MCF 10A (cell line): ENCODE measurements at regions of chr20 and their contacts with region 1.

Region 1: GRCh38 chr20:50509935-50510705 is at the start of gene PTPN1:
- DNase-seq: peak; percentile 99
- H3K4me3 Mint-ChIP-seq: peak within 1 kb of the TSS; percentile 91
- H3K27ac Mint-ChIP-seq: peak within 1 kb of the TSS; percentile 93
- H3K4me1 Mint-ChIP-seq: peaks cover 31% of the 10 kb centered on the region
- H3K27me3 Mint-ChIP-seq: no peaks in the 10 kb centered on the region
- CTCF ChIP-seq: no peak
- total RNA-seq, gene PTPN1: 56.4 and 63.0 TPM in 2 replicates

Region 2: GRCh38 chr20:50153485-50154377 is 356.4 kb before region 1 on chr20 and contains the start of gene PEDS1:
- CTCF ChIA-PET with region 1: interaction called, 4 read pairs
- POLR2A ChIA-PET with region 1: interaction called, 19 read pairs
- intact Hi-C with region 1: no loop called
- DNase-seq: peak; percentile 85
- H3K4me3 Mint-ChIP-seq: peak within 1 kb of the TSS; percentile 87
- H3K27ac Mint-ChIP-seq: peak within 1 kb of the TSS; percentile 94
- H3K4me1 Mint-ChIP-seq: peaks cover 44% of the 10 kb centered on the region
- H3K27me3 Mint-ChIP-seq: no peaks in the 10 kb centered on the region
- CTCF ChIP-seq: no peak
- total RNA-seq, gene PEDS1: 26.0 and 30.5 TPM in 2 replicates

Region 3: DNA sequence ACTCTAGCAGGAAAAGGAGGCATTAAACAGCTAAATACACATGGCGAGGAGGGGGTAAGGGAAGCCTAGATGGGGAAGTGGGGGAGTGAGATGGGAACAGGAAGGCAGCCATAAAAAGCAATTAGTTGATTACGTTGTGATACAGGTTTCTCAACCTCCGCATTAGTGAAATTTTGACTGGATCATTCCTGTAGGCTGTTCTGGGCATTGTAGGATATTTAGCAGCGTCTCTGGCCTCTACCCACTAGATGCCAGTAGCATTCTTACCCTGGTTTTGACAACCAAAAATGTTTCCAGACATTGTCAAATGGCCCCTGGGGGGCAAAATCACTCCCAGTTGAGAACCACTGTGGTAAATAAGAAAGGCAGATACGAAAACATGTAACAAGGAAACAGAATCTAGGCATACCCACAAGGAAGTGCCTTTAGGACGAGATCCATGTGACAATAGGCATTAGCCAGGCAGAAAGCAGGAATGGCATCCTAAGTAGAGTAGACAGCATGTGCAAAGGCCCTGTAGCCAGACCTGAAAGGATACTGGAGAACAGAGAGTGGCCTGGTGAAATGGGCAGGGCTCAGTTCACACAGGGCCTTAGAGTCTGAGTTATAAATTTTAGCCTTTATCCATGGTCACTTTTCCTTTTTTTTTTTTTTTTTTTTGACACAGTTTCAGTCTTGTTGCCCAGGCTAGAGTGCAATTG is 25.7 kb before region 1 on chr20:
- CTCF ChIA-PET with region 1: interaction called, 30 read pairs
- POLR2A ChIA-PET with region 1: interaction called, 480 read pairs
- intact Hi-C with region 1: loop called (anchors 5 kb)
- DNase-seq: peak; percentile 30
- H3K4me3 Mint-ChIP-seq: peak overlapping the region; percentile 75
- H3K27ac Mint-ChIP-seq: peak overlapping the region; percentile 90
- H3K4me1 Mint-ChIP-seq: peaks cover 12% of the 10 kb centered on the region
- H3K27me3 Mint-ChIP-seq: no peaks in the 10 kb centered on the region
- CTCF ChIP-seq: peak; percentile 29

Region 4: DNA sequence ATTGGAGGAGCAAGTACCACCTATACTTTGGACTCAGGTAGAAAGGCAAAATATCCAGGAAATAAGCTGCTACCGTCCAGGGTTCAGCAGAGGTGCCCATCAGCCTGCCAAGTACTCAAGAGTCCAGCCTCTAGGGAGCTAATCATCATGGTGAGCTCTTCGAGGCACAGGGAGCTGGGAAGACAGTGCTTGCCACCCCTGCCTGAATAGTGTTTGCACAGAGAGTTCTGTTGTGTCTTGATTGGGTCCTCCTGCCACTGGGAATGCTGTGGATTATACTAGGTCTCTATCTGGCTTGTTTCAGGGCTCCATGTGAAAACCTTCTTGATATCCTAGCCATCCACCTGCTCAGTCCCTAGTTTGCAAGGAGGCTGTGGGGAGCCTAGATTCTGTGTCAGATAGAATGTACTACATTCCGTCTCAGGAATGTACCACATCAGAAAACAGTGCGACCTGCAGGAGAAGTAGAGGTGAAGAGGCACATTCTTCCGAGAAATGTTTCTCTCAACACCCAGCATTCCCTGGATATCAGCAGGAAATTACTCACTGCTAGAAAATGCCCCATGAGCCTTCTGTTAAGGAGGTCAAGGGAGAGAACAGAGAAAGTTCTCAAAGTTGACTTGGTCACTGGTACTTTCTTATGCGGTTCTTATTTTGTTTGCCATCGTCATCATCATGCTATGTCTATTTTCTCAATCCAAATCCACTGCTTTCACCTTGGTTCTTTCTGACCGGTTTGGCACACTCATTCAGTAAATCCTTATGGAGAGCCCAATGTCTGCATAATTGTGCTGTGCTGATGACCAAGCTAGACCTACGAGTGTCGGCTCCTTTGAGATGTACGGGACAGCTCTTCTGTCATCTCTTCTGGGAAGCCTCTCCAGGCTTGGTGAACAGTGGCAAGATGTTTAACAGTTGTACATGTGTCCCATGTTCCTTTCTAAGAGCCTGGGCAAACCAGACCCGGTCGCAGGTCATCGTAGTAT is 30.8 kb after region 1 on chr20:
- CTCF ChIA-PET with region 1: interaction called, 3 read pairs
- POLR2A ChIA-PET with region 1: interaction called, 109 read pairs
- intact Hi-C with region 1: no loop called
- DNase-seq: peak; percentile 74
- H3K4me3 Mint-ChIP-seq: peak overlapping the region; percentile 51
- H3K27ac Mint-ChIP-seq: peak overlapping the region; percentile 50
- H3K4me1 Mint-ChIP-seq: peaks cover 45% of the 10 kb centered on the region
- H3K27me3 Mint-ChIP-seq: no peaks in the 10 kb centered on the region
- CTCF ChIP-seq: no peak

Region 5: GRCh38 chr20:50561379-50562078 is 51.4 kb after region 1 on chr20:
- CTCF ChIA-PET with region 1: interaction called, 7 read pairs
- POLR2A ChIA-PET with region 1: interaction called, 146 read pairs
- intact Hi-C with region 1: no loop called
- DNase-seq: peak; percentile 89
- H3K4me3 Mint-ChIP-seq: peak overlapping the region; percentile 55
- H3K27ac Mint-ChIP-seq: peak overlapping the region; percentile 97
- H3K4me1 Mint-ChIP-seq: peaks cover 47% of the 10 kb centered on the region
- H3K27me3 Mint-ChIP-seq: no peaks in the 10 kb centered on the region
- CTCF ChIP-seq: no peak

Region 6: DNA sequence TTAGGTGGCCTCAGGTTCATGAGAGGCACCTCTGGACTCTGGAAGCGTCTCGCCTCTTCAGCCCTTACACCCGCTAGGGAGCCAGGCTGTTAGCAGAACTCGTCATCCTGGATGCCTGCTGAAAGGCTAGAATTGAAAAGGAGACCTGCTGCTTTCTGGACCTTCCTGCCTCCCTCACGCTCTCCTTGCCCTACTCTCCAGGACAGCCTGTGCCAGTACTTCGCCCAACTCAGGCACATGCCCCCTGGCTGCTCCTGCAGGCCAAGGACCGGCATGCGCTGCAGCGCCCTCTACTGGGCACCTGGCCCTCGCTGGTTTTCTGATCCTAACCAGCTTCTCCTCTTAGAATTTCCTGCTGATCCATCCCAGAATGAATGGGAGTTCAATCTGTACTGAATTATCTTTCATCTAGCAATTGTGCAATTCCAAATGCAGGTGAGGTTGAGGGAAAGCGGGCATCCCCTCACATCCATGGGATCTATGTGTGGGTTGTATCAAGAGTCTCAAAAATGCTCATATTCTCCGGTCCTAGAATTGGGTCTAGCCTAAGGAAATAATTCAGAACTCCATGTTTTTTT is 78.0 kb after region 1 on chr20:
- CTCF ChIA-PET with region 1: interaction called, 4 read pairs
- POLR2A ChIA-PET with region 1: interaction called, 52 read pairs
- intact Hi-C with region 1: no loop called
- DNase-seq: peak; percentile 81
- H3K4me3 Mint-ChIP-seq: peak overlapping the region; percentile 17
- H3K27ac Mint-ChIP-seq: peak overlapping the region; percentile 83
- H3K4me1 Mint-ChIP-seq: peaks cover 16% of the 10 kb centered on the region
- H3K27me3 Mint-ChIP-seq: no peaks in the 10 kb centered on the region
- CTCF ChIP-seq: peak; percentile 96

Region 7: GRCh38 chr20:50958615-50959542 is 448.8 kb after region 1 on chr20 and contains the start of gene MOCS3:
- CTCF ChIA-PET with region 1: no interaction called
- POLR2A ChIA-PET with region 1: interaction called, 10 read pairs
- intact Hi-C with region 1: no loop called
- DNase-seq: peak; percentile 92
- H3K4me3 Mint-ChIP-seq: peak within 1 kb of the TSS; percentile 91
- H3K27ac Mint-ChIP-seq: peak within 1 kb of the TSS; percentile 100
- H3K4me1 Mint-ChIP-seq: peaks cover 15% of the 10 kb centered on the region
- H3K27me3 Mint-ChIP-seq: no peaks in the 10 kb centered on the region
- CTCF ChIP-seq: no peak
- total RNA-seq, gene MOCS3: 5.8 and 6.0 TPM in 2 replicates